ENCODE measurements at regions of chr20 and their contacts with region 1.

Region 1: GRCh38 chr20:50189681-50190582 is 698 bp upstream of the CEBPB start:
- DNase-seq: peak; percentile 88 to 96 (median 93)
- ATAC-seq: peak; percentile 68 to 79 (median 76)
- H3K4me3 ChIP-seq: peak overlapping the region; percentile 61 to 99 (median 94)
- H3K27ac ChIP-seq: peak overlapping the region; percentile 95 to 100 (median 98)
- H3K4me1 ChIP-seq: no peaks in the 10 kb centered on the region
- H3K27me3 ChIP-seq: no peaks in the 10 kb centered on the region
- CTCF ChIP-seq: peak; percentile 69 to 86 (median 74)

Region 2: DNA sequence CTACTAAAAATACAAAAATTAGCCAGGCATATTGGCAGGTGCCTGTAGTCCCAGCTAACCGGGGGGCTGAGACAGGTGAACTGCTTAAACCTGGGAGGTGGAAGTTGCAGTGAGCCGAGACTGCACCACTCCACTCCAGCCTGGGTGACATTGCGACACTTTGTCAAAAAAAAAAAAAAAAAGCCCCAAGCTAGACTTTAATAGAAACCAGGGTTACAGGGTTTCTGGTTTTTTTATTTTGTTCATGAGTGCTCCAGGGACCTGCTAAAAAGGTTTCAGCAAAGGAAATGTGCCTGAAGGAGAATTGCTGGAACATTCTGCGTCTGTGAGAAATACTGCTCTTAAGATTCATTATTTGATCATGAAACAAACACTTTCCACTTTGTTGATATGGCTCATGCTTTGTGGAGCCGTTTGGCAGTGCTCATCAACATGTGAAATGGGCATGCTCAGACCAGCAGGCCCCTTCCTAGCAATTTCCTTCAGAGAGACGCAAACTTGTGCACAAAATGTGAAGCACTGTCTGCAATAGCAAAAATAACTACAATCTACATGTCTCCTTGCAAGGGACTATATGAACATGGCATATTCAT is 102.6 kb before region 1 on chr20:
- intact Hi-C with region 1: no loop called
- DNase-seq: no peak
- ATAC-seq: no peak
- H3K4me3 ChIP-seq: no peak overlapping the region
- H3K27ac ChIP-seq: no peak overlapping the region
- H3K4me1 ChIP-seq: peaks cover 4 to 8% (median 5%) of the 10 kb centered on the region in 3 donors
- H3K27me3 ChIP-seq: no peaks in the 10 kb centered on the region
- CTCF ChIP-seq: no peak

Region 3: GRCh38 chr20:50144362-50144761 is 45.6 kb before region 1 on chr20:
- intact Hi-C with region 1: no loop called
- DNase-seq: no peak
- ATAC-seq: peak in 3 of 4 donors; percentile 33 to 65 (median 42)
- H3K4me3 ChIP-seq: no peak overlapping the region
- H3K27ac ChIP-seq: peak overlapping the region in 2 of 4 donors; percentile 41 to 48
- H3K4me1 ChIP-seq: peaks cover 5 to 17% (median 12%) of the 10 kb centered on the region in 3 donors
- H3K27me3 ChIP-seq: no peaks in the 10 kb centered on the region
- CTCF ChIP-seq: no peak

Region 4: GRCh38 chr20:50286609-50287008 is 96.7 kb after region 1 on chr20:
- intact Hi-C with region 1: loop called in 1 of 3 experiments (anchors 10 kb)
- DNase-seq: peak in 1 of 6 donors; percentile 21
- ATAC-seq: peak in 3 of 4 donors; percentile 6 to 20 (median 8)
- H3K4me3 ChIP-seq: no peak overlapping the region
- H3K27ac ChIP-seq: peak overlapping the region in 2 of 4 donors; percentile 23 to 50
- H3K4me1 ChIP-seq: peaks cover 0 to 9% (median 0%) of the 10 kb centered on the region in 3 donors
- H3K27me3 ChIP-seq: no peaks in the 10 kb centered on the region
- CTCF ChIP-seq: no peak

Region 5: GRCh38 chr20:50395258-50395729 is 205.4 kb after region 1 on chr20:
- intact Hi-C with region 1: loop called in 1 of 3 experiments (anchors 10 kb)
- DNase-seq: peak in 2 of 6 donors; percentile 56 to 58
- ATAC-seq: peak; percentile 29 to 67 (median 44)
- H3K4me3 ChIP-seq: no peak overlapping the region
- H3K27ac ChIP-seq: peak overlapping the region in 2 of 4 donors; percentile 10 to 39
- H3K4me1 ChIP-seq: peaks cover 0 to 22% (median 13%) of the 10 kb centered on the region in 3 donors
- H3K27me3 ChIP-seq: no peaks in the 10 kb centered on the region
- CTCF ChIP-seq: no peak

Region 6: DNA sequence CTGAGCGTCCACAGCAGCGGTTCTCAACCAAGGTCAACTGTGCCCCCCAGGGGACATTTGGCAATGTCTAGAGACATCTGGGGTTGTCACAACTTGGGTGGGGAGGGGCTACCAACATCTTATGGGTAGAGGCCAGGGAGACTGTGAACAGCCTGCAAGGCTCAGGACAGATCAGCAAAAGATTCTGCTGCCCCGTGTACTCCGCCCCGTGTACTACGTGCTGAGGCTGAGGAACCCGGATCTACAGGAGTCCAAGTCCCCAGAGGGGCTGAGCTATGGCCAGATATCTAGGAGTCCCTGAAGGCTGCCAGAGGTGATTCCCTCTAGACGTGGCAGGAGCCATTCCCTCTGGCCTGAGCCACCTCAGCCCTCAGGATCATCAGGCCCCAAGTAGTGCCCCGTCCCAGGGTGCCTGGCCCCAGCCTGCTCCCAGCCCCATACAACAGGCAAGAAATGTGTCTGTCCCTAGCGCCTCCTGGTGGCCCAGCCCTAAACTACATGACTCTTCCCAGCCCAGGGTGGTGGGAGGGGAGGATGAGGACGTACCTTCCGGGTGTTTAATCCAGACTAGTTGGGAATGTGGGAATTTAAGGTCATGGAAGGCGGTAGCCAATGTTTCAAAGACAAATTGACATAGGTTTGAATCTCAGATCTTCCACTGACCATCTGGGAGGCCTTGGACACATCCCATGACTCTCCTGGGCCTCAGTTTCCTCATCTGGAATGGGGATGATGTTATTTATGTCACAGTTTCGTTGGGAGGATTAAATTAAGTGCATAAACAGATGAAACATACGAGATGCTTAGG is 270.7 kb after region 1 on chr20:
- intact Hi-C with region 1: loop called in 2 of 3 experiments (anchors 2 to 5 kb)
- DNase-seq: peak; percentile 79 to 97 (median 93)
- ATAC-seq: peak; percentile 88 to 93 (median 90)
- H3K4me3 ChIP-seq: no peak overlapping the region
- H3K27ac ChIP-seq: peak overlapping the region in 1 of 4 donors; percentile 4
- H3K4me1 ChIP-seq: peaks cover 0 to 22% (median 7%) of the 10 kb centered on the region in 3 donors
- H3K27me3 ChIP-seq: no peaks in the 10 kb centered on the region
- CTCF ChIP-seq: peak; percentile 76 to 90 (median 85)

Region 7: GRCh38 chr20:50588034-50588611 is 398.2 kb after region 1 on chr20:
- intact Hi-C with region 1: loop called in 1 of 3 experiments (anchors 5 kb)
- DNase-seq: peak in 5 of 6 donors; percentile 38 to 92 (median 66)
- ATAC-seq: peak; percentile 48 to 86 (median 60)
- H3K4me3 ChIP-seq: no peak overlapping the region
- H3K27ac ChIP-seq: no peak overlapping the region
- H3K4me1 ChIP-seq: peaks cover 0 to 5% (median 0%) of the 10 kb centered on the region in 3 donors
- H3K27me3 ChIP-seq: no peaks in the 10 kb centered on the region
- CTCF ChIP-seq: peak; percentile 66 to 77 (median 72)

Measured in pancreas (tissue), 10 donors.